ENCODE measurements at regions of chrX and their contacts with region 1.

Region 1: DNA sequence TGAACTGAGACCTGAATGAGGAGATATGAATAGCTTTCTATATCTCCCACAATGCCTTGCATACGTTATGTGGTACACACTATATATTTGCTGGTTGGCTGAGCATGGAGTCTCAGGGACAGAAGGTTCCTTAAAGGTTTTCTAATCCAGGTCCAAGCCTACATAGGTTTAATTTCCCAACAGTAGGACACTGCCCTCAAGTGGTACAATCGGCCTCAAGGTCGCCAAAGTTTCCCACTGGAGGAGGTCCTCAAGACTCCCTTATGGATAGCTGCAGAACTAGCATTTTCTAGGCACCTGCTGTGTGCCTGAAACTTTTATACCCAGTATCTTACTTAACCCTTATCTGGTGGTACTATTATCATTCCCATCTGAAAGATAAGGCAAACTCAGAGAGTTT is 21.0 kb upstream of the EFNB1 start:
- DNase-seq: no peak
- ATAC-seq: 0 out of 2 replicates have a peak, but pooled peaks have one; percentile 27
- H3K4me3 ChIP-seq: no peak overlapping the region
- H3K27ac ChIP-seq: no peak overlapping the region
- H3K4me1 ChIP-seq: no peaks in the 10 kb centered on the region
- H3K27me3 ChIP-seq: peaks cover 18% of the 10 kb centered on the region
- CTCF ChIP-seq: peak; percentile 26
- POLR2A ChIP-seq: no peak
- RAD21 ChIP-seq: peak; percentile 29; the same call in 1 of the 2 replicates

Region 2: GRCh38 chrX:68511255-68511654 is 296.6 kb before region 1 on chrX:
- CTCF ChIA-PET with region 1: no interaction called
- POLR2A ChIA-PET with region 1: no interaction called
- dilution Hi-C with region 1: no loop called
- in situ Hi-C with region 1: no loop called
- intact Hi-C with region 1: loop called (anchors 1 kb)
- DNase-seq: peak; percentile 48
- ATAC-seq: peak; percentile 86
- H3K4me3 ChIP-seq: no peak overlapping the region
- H3K27ac ChIP-seq: no peak overlapping the region
- H3K4me1 ChIP-seq: no peaks in the 10 kb centered on the region
- H3K27me3 ChIP-seq: no peaks in the 10 kb centered on the region
- CTCF ChIP-seq: peak; percentile 77
- POLR2A ChIP-seq: no peak
- RAD21 ChIP-seq: peak; percentile 74

Region 3: DNA sequence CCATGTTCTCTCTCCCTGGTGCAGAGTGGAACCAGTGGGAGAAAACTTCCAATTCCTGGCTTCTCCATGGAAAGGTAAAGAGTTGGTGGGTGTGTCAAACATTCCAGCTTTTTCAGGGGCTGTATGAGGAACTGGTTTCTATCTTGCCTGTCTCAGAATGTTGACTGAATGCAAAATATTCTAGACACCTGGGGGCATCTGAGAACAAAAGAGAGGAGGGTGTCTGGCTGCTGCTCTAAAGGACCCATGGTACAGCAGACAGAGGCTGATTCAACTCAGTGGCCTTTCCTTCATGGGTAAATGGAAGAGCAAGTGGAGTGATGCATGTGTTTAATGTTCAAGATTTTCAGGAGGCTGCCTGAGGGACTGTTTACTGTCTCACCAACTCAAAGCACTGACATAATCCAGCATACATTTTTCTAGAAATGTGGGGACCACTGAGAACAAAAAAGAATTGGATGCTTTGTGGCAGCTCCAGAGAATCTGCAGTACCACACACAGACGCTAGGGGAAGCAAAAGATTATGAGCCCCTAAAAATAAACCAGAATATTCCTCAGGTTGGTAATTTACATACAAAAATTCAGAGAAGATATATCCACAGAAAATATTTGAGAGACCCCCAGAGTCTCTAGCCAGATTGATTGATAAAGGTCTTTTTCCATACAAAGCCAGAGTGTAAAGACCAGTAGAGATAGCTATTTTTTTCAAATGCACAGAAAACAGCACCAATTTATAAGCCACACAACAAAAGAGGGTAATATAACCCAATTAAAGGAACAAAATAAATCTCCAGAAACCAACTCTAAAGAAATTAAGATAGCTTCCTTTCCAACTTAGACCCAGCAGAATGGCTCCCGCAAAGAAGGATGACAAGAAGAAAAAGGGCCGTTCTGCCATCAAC is 208.3 kb before region 1 on chrX:
- CTCF ChIA-PET with region 1: no interaction called
- POLR2A ChIA-PET with region 1: no interaction called
- dilution Hi-C with region 1: no loop called
- in situ Hi-C with region 1: no loop called
- intact Hi-C with region 1: loop called (anchors 5 kb)
- DNase-seq: peak; percentile 4
- ATAC-seq: peak; percentile 59
- H3K4me3 ChIP-seq: no peak overlapping the region
- H3K27ac ChIP-seq: no peak overlapping the region
- H3K4me1 ChIP-seq: no peaks in the 10 kb centered on the region
- H3K27me3 ChIP-seq: peaks cover 2% of the 10 kb centered on the region; the same call in 1 of the 2 replicates
- CTCF ChIP-seq: peak; percentile 66
- POLR2A ChIP-seq: no peak
- RAD21 ChIP-seq: peak; percentile 60

Region 4: DNA sequence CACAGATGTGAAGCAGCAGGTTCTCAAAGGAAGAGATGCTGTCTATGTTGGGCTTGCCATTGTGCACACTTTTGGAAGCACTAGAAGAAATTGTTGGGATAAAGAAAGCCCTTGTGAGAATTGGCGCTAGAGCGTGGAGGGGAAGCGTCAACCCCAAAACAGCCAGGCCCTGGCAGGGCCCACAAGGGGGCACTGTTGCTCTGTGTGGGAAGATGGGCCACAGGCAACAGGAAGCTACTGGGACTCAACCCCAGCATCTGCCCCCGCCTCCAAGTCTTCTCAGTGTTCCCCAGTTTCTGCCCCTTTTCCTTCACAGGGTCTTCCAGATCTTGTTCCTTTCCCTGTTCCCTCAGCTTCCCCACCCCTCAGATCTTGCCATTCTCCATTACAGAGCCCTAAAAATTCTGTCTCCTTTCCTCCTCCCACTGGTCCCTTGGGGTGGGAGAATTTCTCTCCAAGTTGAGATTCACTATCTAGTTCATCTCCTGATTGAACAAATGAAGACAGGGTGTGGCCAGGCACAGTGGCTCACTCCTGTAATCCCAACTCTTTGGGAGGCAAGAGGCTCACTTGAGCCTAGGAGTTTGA is 74.8 kb before region 1 on chrX:
- CTCF ChIA-PET with region 1: no interaction called
- POLR2A ChIA-PET with region 1: no interaction called
- dilution Hi-C with region 1: no loop called
- in situ Hi-C with region 1: no loop called
- intact Hi-C with region 1: loop called (anchors 2 kb)
- DNase-seq: peak; percentile 31
- ATAC-seq: peak; percentile 81
- H3K4me3 ChIP-seq: no peak overlapping the region
- H3K27ac ChIP-seq: no peak overlapping the region
- H3K4me1 ChIP-seq: no peaks in the 10 kb centered on the region
- H3K27me3 ChIP-seq: peaks cover 21% of the 10 kb centered on the region
- CTCF ChIP-seq: peak; percentile 67
- POLR2A ChIP-seq: no peak
- RAD21 ChIP-seq: peak; percentile 70

Measured in IMR-90 (cell line).